ENCODE measurements at regions of chr11 and their contacts with region 1.

Region 1: DNA sequence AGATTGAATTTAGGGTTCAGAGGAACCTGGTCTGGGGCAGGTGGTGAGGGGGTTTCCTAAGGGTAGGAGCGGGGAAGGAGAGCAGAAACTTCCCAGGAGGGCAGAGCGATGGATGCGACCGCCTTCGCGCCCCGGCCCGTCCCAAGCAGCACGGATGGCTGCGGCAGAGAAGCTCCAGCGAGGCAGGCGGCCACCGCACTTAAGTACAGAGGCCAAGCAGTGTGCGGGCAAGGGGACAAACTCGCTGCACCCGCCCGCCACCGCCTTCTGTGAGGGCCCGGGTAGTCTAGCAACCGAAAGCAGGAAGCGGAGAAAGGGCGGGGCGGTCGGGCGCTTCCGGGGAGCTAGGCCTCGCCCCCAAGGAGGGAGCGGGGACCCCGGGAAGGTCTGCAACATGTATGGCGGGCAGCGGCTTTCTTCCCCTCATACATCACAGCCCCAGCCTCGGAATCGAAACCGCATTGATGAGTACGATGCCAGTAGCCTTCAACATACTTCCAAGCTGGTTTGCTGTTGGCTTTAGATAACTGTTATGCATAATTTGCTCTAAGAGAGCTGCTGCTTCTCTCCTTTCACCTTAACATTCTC is at the start of gene AGBL2:
- DNase-seq: peak; percentile 91
- H3K4me3 Mint-ChIP-seq: peak within 1 kb of the TSS; percentile 86
- H3K27ac Mint-ChIP-seq: peak within 1 kb of the TSS; percentile 95
- H3K4me1 Mint-ChIP-seq: peaks cover 21% of the 10 kb centered on the region
- H3K27me3 Mint-ChIP-seq: no peaks in the 10 kb centered on the region
- total RNA-seq, gene AGBL2: 4.2 to 5.0 TPM

Region 2: DNA sequence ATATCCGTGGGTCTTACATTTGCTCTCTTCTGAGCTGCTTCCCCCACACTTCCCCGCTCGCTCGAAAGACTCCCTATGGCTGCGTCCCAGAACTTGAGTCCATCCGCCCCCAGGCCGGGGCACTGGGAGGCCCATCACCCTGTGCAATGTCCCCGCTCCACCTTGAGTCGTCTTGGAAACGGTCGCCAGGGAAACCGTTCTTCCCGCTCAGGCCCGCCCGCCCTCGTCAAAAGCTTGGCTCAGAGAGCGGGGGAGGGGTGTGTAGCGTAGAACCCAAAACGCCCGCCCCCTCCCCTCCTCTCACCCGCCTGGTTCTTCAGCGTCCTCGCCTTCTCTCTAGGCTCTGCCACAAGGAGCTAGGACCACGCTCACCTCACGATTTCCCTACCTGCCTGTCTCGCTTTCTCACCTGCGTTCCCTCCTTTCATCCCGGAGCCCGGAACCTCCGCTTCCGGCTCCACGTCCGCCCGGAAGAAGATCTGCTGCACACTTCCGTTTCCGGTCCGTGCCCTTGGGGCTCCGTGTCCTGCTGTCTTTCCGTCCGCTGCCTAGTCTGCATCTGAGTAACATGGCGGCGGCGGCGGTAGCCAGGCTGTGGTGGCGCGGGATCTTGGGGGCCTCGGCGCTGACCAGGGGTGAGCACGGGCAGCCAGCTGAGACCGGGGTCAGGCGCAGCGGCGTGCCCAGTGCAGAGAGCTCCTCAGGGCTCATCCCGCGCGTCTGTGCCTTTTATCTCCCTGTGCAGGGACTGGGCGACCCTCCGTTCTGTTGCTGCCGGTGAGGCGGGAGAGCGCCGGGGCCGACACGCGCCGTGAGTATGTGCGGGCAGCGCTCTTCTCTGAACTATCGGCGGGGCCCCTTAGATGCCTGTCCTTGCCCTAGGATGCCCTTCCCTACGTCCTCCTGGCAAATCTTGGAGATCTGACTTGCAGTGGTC is 136.4 kb before region 1 on chr11 and contains the starts of genes KBTBD4 and NDUFS3:
- CTCF ChIA-PET with region 1: no interaction called
- POLR2A ChIA-PET with region 1: no interaction called
- intact Hi-C with region 1: loop called (anchors 5 kb)
- DNase-seq: peak; percentile 93
- H3K4me3 Mint-ChIP-seq: peak within 1 kb of the TSS; percentile 94
- H3K27ac Mint-ChIP-seq: peak within 1 kb of the TSS; percentile 93
- H3K4me1 Mint-ChIP-seq: peaks cover 32% of the 10 kb centered on the region
- H3K27me3 Mint-ChIP-seq: peaks cover 1% of the 10 kb centered on the region
- total RNA-seq, gene KBTBD4: 18.7 to 18.8 TPM
- total RNA-seq, gene NDUFS3: 94.0 to 94.4 TPM

Region 3: GRCh38 chr11:47667135-47667534 is 48.0 kb before region 1 on chr11:
- CTCF ChIA-PET with region 1: no interaction called
- POLR2A ChIA-PET with region 1: interaction called, 6 read pairs
- intact Hi-C with region 1: loop called (anchors 2 kb)
- DNase-seq: no peak
- H3K4me3 Mint-ChIP-seq: no peak overlapping the region
- H3K27ac Mint-ChIP-seq: no peak overlapping the region
- H3K4me1 Mint-ChIP-seq: peaks cover 18% of the 10 kb centered on the region
- H3K27me3 Mint-ChIP-seq: no peaks in the 10 kb centered on the region

Region 4: DNA sequence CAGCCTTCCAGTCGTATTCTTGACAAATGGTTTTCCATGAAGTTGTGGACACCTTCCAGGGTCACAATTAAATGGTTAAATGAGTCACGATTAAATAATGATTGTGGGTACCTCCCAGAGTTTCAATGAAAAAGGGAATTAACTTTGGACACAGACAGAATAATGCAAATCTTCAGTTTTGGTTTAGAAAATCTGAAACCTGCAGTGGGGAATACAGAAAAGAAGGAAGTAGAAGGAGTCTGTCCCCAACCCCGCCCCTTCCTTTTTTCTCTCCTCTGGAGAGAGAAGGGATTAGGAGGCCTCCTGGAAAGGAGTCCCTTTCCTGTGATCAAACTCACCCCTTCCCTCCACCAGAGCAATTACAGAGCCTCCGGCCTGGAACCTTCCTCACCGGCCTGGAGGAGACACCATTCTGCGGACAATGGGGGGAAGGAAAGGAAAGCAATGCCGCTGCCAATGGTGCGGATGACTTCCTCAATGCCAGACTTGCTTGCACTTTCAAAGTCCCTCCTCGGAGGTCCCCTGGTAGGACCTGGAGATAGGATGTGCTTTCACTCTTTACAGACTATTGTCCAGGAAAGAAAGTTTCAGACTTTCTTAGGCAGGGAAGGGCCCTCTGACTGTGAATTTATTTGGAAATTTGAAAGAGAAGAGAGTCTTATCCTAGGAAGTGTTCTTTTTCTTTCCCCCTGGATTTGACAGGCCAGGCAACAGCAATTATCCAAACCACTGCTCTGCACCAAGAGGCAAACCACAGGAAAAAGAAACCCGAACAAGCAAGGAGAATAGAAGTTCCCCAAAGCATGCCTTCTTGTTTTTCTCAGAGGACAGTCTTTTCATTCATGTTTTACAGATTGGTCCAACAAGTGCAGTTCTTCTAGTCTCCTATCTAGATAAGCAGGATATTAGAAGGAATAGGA is 352.0 kb after region 1 on chr11:
- CTCF ChIA-PET with region 1: no interaction called
- POLR2A ChIA-PET with region 1: no interaction called
- intact Hi-C with region 1: no loop called
- DNase-seq: no peak
- H3K4me3 Mint-ChIP-seq: no peak overlapping the region
- H3K27ac Mint-ChIP-seq: no peak overlapping the region
- H3K4me1 Mint-ChIP-seq: peaks cover 27% of the 10 kb centered on the region
- H3K27me3 Mint-ChIP-seq: no peaks in the 10 kb centered on the region

Measured in activated CD4-positive, alpha-beta memory T cell treated with anti-CD3 and anti-CD28 coated beads for 36 hours (primary cell).